Mucosa of descending colon (tissue), 3 donors: ENCODE measurements at regions of chr11 and their contacts with region 1.

Region 1: GRCh38 chr11:14643697-14644225 is at the start of gene PDE3B:
- DNase-seq: peak; percentile 90 to 92 (median 91)
- ATAC-seq: peak; percentile 92
- H3K4me3 ChIP-seq: peak within 1 kb of the TSS; percentile 71
- H3K4me1 ChIP-seq: peaks cover 25% of the 10 kb centered on the region
- CTCF ChIP-seq: no peak
- total RNA-seq, gene PDE3B: 22.4 to 47.0 (median 25.9) TPM

Region 2: DNA sequence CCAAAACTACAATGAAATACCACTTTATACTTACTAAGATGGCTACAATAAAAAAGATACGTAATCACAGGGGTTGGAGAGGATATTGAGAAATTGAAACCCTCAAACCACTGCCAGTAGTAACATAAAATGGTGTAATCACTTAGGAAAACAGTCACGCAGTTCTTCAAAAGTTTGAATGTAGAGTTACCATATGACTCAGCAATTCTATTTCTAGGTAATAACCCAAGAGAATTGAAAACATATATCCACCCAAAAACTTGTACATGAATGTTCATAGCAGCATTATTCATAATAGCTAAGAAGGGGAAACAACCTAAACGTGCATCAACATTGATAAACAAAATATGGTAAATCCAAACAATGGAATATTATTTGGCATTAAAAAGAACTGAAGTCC is 99.2 kb before region 1 on chr11:
- intact Hi-C with region 1: loop called (anchors 5 to 10 kb)
- DNase-seq: no peak
- ATAC-seq: no peak
- H3K4me3 ChIP-seq: no peak overlapping the region
- H3K4me1 ChIP-seq: peaks cover 26% of the 10 kb centered on the region
- CTCF ChIP-seq: no peak

Region 3: GRCh38 chr11:14789879-14790484 is 146.2 kb after region 1 on chr11:
- intact Hi-C with region 1: no loop called
- DNase-seq: no peak
- ATAC-seq: no peak
- H3K4me3 ChIP-seq: no peak overlapping the region
- H3K4me1 ChIP-seq: no peaks in the 10 kb centered on the region
- CTCF ChIP-seq: no peak